Right ventricle myocardium superior (tissue), 1 donor: ENCODE measurements at regions of chr10 and their contacts with region 1.

Region 1: GRCh38 chr10:48289501-48290238 is 15.2 kb upstream of the FRMPD2 start:
- DNase-seq: peak; percentile 64
- ATAC-seq: peak; percentile 79

Region 2: DNA sequence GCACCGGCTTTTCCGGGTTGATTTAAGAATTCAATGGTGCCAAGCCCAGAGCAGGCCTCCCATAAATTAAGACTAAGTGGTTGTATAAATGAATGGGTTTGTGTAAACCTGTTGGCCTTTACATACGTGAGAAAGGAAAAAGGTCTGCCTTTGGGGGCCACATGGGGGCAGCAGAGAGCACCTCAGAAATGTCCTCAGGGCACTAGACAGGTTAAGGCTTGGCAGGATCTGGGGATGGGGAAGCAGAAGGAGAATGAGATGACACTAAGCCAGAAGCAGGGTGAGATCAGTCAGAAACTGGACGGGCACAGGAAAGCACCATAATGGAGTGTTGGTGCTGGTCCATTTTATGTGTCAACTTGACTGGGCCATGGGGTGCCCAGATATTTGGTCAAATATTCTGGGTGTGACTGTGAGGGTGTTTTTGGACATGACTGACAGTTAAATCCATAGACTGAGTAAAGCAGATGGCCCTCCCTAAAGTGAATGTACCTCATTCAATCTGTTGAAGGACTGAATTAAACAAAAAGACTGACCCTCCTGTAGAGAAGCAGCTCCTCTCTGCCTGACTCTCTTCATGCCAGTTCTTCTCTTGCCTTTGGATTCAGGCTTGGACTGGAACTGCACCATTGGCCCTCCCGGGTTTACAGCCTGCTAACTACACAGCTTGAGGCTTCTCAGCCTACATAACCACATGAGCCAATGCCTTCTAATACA is 74.0 kb before region 1 on chr10:
- intact Hi-C with region 1: loop called (anchors 10 kb)
- DNase-seq: no peak
- ATAC-seq: peak; percentile 52